PC-9 (cell line): ENCODE measurements at regions of chr1 and their contacts with region 1.

Region 1: DNA sequence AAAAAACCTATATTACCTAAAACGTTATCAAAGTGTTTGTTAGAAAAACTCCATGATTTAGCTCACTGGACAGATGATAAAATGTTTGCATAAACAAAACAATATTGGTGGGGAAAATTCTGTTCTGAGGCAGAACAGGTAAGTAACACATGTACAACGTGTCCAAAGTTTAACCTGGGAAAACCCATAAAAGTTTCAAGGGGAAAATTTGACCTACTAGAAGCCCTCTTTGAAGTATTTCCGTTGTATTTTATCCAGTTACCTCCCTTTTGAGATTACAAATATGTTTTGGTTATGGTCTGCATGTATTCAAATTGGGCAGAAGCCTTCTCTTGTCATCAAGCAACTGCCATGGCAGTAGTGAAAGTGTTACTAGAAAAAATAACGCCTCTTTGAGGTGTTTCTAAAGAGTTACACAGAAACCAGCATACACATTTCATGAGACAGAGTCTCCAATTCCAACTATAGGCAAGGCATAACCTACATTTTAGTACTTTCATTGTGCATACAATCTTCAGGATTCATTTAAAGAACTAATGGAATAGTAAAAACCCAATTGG is 58.0 kb upstream of the PDC start:
- DNase-seq: no peak
- H3K4me3 ChIP-seq: no peak overlapping the region
- H3K27ac ChIP-seq: no peak overlapping the region
- H3K4me1 ChIP-seq: no peaks in the 10 kb centered on the region
- H3K27me3 ChIP-seq: no peaks in the 10 kb centered on the region
- CTCF ChIP-seq: no peak

Region 2: DNA sequence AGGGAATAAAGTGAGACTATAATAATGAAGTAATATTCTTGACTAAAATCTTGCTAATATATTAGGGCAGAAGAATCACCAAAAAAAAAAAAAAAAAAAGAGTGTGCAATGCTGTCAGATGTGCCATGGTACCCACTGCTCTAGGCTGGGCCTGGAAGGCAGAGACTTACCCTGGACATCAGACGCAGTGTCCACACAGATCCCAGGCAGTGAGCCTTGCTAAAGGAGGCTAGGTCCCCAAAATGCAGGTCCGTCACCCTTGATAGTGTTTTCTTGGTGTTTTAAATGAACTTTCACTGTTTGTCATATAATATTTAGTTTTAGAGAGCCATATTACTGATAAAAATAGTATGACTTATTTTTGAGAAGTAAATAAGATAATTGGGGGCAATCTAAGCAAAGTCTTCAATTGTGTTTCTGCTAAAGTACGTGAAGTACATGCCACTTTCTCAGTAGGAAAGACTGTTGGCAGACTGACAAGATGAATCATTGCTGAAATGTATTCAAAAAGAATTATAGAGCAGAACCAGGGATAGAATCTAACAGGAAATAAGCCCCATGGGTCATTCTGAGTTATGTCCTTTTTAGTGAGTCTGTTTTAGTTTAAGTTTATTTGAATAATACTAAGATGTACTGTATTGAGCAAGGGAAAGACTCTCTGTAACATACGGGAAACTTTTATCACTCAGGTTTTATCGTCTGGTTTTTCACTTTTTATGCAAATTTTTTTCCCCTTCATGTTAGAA is 16.7 kb after region 1 on chr1:
- CTCF ChIA-PET with region 1: no interaction called
- POLR2A ChIA-PET with region 1: no interaction called
- intact Hi-C with region 1: no loop called
- DNase-seq: no peak
- H3K4me3 ChIP-seq: no peak overlapping the region
- H3K27ac ChIP-seq: no peak overlapping the region
- H3K4me1 ChIP-seq: no peaks in the 10 kb centered on the region
- H3K27me3 ChIP-seq: no peaks in the 10 kb centered on the region
- CTCF ChIP-seq: no peak

Region 3: GRCh38 chr1:186559601-186560116 is 40.8 kb after region 1 on chr1:
- CTCF ChIA-PET with region 1: interaction called, 22 read pairs
- POLR2A ChIA-PET with region 1: no interaction called
- intact Hi-C with region 1: no loop called
- DNase-seq: no peak
- H3K4me3 ChIP-seq: no peak overlapping the region
- H3K27ac ChIP-seq: peak overlapping the region; percentile 16
- H3K4me1 ChIP-seq: no peaks in the 10 kb centered on the region
- H3K27me3 ChIP-seq: no peaks in the 10 kb centered on the region
- CTCF ChIP-seq: no peak